Calu3 (cell line): ENCODE measurements at regions of chr15 and their contacts with region 1.

Region 1: DNA sequence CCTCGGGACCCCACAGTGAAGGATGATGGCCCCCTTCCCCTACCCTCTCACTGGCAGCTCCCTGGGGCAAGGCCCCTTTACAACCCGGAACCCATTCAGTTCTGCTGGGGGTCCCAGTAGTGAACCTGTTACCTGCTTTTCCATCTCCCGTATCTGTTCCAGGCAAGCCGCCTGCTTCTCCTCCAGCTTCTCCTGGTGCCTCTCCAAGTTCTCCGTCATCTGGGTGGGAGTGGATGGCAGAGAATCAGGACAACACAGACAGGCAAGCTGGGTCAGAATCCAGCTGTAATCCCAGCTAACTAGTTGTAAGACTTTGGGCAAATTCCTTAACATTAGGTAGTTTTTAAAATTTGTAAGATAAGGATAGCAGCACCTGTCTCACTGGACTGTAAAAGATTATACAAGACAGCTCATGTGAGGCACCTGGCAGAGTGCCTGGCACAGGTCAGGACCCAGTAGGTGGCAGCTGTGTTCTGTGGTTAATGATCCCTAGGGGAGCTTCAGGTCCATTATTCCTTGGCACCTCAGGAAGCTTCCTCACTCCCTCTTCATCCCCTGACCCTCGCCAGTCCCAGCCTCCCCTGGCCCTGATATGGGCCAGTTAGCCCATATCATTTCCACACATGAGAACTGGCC is 6.4 kb upstream of the ANKRD63 start:
- DNase-seq: peak; percentile 60
- H3K4me3 Mint-ChIP-seq: no peak overlapping the region
- H3K27ac Mint-ChIP-seq: no peak overlapping the region
- H3K4me1 Mint-ChIP-seq: peaks cover 12% of the 10 kb centered on the region
- H3K27me3 Mint-ChIP-seq: no peaks in the 10 kb centered on the region
- CTCF ChIP-seq: no peak

Region 2: GRCh38 chr15:40307421-40308211 is 18.4 kb after region 1 on chr15 and contains the start of gene PLCB2:
- CTCF ChIA-PET with region 1: interaction called, 25 read pairs
- intact Hi-C with region 1: no loop called
- DNase-seq: peak; percentile 50
- H3K4me3 Mint-ChIP-seq: peak within 1 kb of the TSS; percentile 63
- H3K27ac Mint-ChIP-seq: peak within 1 kb of the TSS; percentile 71
- H3K4me1 Mint-ChIP-seq: peaks cover 17% of the 10 kb centered on the region
- H3K27me3 Mint-ChIP-seq: no peaks in the 10 kb centered on the region
- CTCF ChIP-seq: no peak
- total RNA-seq, gene PLCB2: 37.3 and 43.1 TPM in 2 replicates

Region 3: GRCh38 chr15:40338041-40338657 is 48.9 kb after region 1 on chr15:
- CTCF ChIA-PET with region 1: interaction called, 19 read pairs
- intact Hi-C with region 1: no loop called
- DNase-seq: peak; percentile 74
- H3K4me3 Mint-ChIP-seq: peak overlapping the region; percentile 77
- H3K27ac Mint-ChIP-seq: peak overlapping the region; percentile 89
- H3K4me1 Mint-ChIP-seq: peaks cover 25% of the 10 kb centered on the region
- H3K27me3 Mint-ChIP-seq: no peaks in the 10 kb centered on the region
- CTCF ChIP-seq: peak; percentile 43